ENCODE measurements at regions of chr7 and their contacts with region 1.

Region 1: DNA sequence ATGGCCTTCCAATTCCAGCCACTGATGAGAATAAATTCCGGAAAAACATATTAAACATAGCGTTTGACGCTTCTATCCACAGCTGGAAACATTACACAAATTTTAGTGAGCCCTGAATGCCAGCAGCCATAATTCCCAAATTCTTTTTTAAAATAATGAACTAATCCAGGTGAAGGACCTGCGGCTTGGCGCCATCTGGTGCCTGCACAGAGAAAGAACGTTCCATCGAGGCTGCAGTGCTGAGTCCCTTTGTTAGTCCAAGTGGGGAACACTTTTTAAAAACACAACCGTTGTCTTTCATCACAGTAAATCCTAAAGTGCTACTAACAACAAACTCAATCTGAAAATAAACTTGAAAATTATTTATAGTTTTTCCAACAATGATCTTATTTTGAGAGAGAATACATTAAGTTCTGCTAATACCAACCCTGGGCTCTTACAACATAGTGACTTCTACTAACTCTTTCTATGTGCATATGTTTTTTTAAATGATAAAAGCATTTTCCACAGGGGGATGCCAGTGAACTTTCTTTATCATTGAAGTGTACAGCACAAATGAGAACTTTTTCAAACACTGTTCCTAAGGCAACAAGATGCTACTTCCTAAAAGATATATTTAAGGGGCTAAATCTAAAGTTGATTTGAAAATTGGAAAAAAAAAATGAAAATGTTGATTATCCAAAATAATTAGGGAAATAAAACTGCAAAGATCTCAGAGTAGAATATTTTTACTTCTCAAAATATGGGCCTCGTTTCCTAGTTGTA is 166.9 kb upstream of the RNF32 start:
- DNase-seq: peak; percentile 56

Region 2: DNA sequence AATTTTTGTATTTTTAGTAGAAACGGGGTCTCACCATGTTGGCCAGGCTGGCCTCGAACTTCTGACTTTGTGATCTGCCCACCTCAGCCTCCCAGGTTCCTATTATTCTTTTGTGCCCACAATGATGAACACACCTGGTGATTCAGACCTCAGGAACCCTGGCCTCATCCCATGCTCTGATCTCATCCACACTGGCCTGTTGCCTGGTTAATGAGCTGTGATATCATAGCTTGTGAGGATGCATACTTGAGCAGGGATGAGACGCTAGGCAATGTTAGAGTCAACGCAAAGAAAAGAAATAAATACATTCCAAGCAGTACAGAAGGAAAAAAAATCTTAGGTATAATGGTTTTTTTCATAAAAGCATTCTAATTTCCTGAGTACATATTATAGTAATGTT is 84.5 kb after region 1 on chr7:
- in situ Hi-C with region 1: loop called (anchors 10 kb)
- DNase-seq: peak; percentile 92